ENCODE measurements at regions of chr4 and their contacts with region 1.

Region 1: GRCh38 chr4:152269448-152270191 is 266.3 kb downstream of the FBXW7 start:
- DNase-seq: no peak
- ATAC-seq: no peak
- H3K4me3 Mint-ChIP-seq: no peak overlapping the region
- H3K27ac Mint-ChIP-seq: no peak overlapping the region
- H3K4me1 Mint-ChIP-seq: no peaks in the 10 kb centered on the region
- H3K27me3 Mint-ChIP-seq: peaks cover 7% of the 10 kb centered on the region
- CTCF ChIP-seq: no peak

Region 2: DNA sequence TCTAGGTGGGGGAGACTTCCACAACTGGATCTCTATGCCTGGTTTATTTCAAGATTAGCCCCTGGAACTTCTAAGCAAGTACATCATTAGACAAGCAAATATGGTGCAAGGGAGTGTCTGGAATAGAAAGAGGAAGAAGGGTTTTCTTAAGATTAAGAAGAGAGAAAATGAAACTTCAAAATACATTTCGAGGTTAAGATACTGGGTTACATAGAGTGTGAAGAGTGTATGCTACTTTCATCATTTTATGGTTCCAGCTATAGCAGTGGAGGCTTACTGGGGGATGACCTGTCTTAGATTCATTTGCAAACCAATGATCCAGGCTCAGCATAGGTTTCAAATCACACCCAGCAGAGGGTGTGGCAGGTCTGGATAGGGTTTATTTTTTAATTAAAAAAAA is 364.4 kb before region 1 on chr4:
- CTCF ChIA-PET with region 1: no interaction called
- POLR2A ChIA-PET with region 1: interaction called, 12 read pairs
- intact Hi-C with region 1: no loop called
- DNase-seq: no peak
- ATAC-seq: no peak
- H3K4me3 Mint-ChIP-seq: no peak overlapping the region
- H3K27ac Mint-ChIP-seq: no peak overlapping the region
- H3K4me1 Mint-ChIP-seq: peaks cover 6% of the 10 kb centered on the region
- H3K27me3 Mint-ChIP-seq: no peaks in the 10 kb centered on the region
- CTCF ChIP-seq: no peak

Measured in activated B cell treated with CpG ODN at 0.5 μM for 24 hours (primary cell).